ENCODE measurements at regions of chr2 and their contacts with region 1.

Region 1: DNA sequence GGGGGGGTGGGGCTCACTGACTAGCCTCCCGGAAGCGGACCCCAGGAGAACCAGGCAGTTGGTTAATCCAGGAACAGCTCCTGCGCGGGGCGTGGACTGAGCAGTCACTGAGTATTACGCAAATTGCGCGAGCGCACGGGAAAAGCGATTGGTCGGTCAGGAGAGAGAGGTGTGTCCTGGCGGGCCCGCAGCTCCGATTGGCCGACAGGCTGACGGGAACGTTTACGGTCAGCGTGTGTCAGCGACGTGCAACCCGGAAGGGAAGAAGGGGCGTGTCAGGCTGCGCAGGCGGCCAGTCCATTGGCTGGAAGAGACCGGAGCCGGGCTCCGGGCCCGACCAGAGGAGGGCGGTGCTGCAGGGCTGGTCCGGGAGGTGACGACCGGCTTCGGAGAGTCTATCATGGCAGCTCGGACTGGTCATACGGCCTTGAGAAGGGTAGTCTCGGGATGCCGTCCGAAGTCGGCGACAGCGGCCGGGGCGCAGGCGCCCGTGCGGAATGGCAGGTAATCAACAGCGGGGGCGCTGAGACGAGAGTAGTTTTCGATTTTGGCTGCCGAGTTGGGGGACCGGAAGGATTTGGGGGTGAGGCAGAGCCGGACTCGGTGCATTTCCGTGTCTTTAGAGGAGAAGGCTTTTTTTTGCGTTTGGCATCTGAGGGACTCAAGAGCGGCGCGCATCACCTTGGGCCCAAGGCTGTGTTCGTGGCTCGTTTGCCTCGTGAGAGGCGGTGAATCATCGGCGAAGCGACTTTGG is at the start of gene COQ10B:
- DNase-seq: peak; percentile 98
- CTCF ChIP-seq: peak; percentile 18

Region 2: GRCh38 chr2:197434541-197435513 is 18.5 kb before region 1 on chr2 and contains the start of gene SF3B1:
- CTCF ChIA-PET with region 1: interaction called, 45 read pairs
- POLR2A ChIA-PET with region 1: interaction called, 13 read pairs
- DNase-seq: peak; percentile 96
- CTCF ChIP-seq: no peak

Region 3: DNA sequence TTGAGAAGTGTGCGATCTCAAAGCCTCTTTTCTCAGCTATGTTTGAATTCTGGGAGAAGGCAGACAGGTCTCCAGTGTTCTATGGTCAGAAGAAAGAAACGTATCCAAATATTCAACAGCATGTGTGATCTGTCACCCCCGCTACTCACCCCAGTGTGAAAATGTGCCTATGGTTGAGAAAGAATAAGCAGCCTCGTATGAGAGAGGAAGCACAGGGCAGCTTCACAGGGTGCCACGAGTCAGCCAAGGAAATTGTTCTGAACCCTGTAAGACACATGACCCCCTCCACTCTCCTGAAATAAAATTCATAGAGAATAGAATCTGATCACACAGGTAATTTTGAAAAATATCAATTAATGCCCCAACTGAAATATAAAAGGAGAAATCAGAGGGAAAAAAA is 10.5 kb before region 1 on chr2:
- CTCF ChIA-PET with region 1: interaction called, 45 read pairs
- POLR2A ChIA-PET with region 1: interaction called, 13 read pairs
- DNase-seq: no peak
- CTCF ChIP-seq: no peak

Region 4: GRCh38 chr2:198044777-198045176 is 591.4 kb after region 1 on chr2:
- CTCF ChIA-PET with region 1: no interaction called
- POLR2A ChIA-PET with region 1: no interaction called
- DNase-seq: no peak
- CTCF ChIP-seq: no peak

Measured in GM10248 (cell line).